Endothelial cell of umbilical vein (primary cell): ENCODE measurements at regions of chr2 and their contacts with region 1.

Region 1: DNA sequence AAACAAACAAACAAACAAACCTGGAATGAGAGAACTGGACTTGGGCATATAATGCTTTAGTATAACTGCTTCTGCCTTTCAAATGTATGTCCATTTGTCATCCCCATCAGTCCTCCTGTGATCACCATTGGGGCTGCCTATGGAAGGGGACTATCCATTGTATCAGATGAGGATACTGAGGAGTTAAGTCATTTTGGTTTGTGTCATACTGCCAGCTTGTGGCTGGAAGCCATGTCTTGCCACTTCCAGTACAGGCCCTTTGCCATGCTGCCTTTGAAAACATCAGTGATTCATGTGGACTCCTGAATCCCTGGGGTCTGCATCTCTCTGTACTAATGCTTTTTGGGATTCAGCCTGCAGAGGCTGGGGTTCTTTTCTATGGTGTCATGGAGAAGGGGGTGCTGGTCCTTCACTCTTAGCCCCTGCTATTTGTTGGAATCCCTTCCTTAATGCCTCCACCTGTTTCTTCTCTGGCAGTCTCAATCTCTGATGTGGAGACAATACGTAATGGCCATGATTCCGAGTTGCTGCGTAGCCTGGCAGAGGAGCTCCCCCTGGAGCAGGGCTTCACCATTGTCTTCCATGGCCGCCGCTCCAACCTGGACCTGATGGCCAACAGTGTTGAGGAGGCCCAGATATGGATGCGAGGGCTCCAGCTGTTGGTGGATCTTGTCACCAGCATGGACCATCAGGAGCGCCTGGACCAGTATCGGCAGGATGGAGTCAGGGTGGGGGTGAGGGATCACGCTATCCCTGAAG is 10.6 kb downstream of the PLCD4 start:
- DNase-seq: no peak
- H3K4me3 ChIP-seq: no peak overlapping the region
- H3K27ac ChIP-seq: no peak overlapping the region
- H3K4me1 ChIP-seq: peaks cover 9% of the 10 kb centered on the region
- H3K27me3 ChIP-seq: no peaks in the 10 kb centered on the region
- CTCF ChIP-seq: no peak
- POLR2A ChIP-seq: no peak

Region 2: GRCh38 chr2:218557941-218558340 is 60.3 kb before region 1 on chr2:
- CTCF ChIA-PET with region 1: no interaction called
- POLR2A ChIA-PET with region 1: no interaction called
- dilution Hi-C with region 1: no loop called
- intact Hi-C with region 1: no loop called
- DNase-seq: no peak
- H3K4me3 ChIP-seq: peak overlapping the region in 1 of 3 experiments; percentile 14
- H3K27ac ChIP-seq: peak overlapping the region; percentile 48
- H3K4me1 ChIP-seq: peaks cover 11% of the 10 kb centered on the region
- H3K27me3 ChIP-seq: no peaks in the 10 kb centered on the region
- CTCF ChIP-seq: no peak
- POLR2A ChIP-seq: no peak

Region 3: GRCh38 chr2:218631837-218632236 is 13.6 kb after region 1 on chr2:
- CTCF ChIA-PET with region 1: interaction called, 6 read pairs
- POLR2A ChIA-PET with region 1: interaction called, 3 read pairs
- dilution Hi-C with region 1: no loop called
- intact Hi-C with region 1: loop called (anchors 1 kb)
- DNase-seq: peak; percentile 95
- H3K4me3 ChIP-seq: no peak overlapping the region
- H3K27ac ChIP-seq: peak overlapping the region; percentile 78
- H3K4me1 ChIP-seq: peaks cover 20% of the 10 kb centered on the region
- H3K27me3 ChIP-seq: no peaks in the 10 kb centered on the region
- CTCF ChIP-seq: no peak
- POLR2A ChIP-seq: peak; percentile 59